ENCODE measurements at regions of chr6 and their contacts with region 1.

Region 1: DNA sequence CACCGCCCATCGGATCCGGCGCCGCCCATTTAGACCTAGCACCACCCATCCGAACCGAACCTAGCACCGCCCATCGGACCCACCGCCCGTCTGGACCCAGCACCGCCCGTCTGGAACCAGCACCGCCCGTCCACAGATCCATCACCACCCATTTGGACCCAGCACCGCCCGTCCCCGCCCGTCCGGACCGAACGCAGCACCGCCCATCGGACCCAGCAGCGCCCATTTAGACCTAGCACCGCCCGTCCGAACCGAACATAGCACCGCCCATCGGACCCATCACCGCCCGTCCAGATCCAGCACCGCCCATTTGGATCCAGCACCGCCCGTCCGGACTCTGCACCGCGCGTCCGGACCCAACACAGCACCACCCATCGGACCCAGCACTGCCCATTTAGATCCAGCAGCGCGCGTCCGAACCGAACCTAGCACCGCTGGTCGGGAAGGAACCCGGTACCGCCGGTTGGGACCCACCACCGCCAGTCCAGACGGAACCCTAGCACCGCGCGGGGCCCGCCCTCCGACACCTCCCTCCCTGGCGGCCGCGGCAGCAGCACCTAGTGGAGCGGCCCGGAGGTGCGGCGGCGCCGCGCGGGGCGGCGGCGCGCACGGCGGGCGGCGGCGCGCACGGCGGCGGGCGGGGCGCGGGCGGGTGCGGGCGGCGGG is 348 bp upstream of the AFDN start:
- DNase-seq: peak; percentile 11 to 73 (median 55)
- ATAC-seq: peak; percentile 97
- H3K4me3 ChIP-seq: peak overlapping the region; percentile 66
- H3K4me3 Mint-ChIP-seq: peak overlapping the region; percentile 83 to 91 (median 85)
- H3K27ac ChIP-seq: no peak overlapping the region
- H3K27ac Mint-ChIP-seq: peak overlapping the region in 4 of 9 donors; percentile 44 to 69 (median 60)
- H3K4me1 ChIP-seq: peaks cover 0 to 14% of the 10 kb centered on the region in 2 donors
- H3K4me1 Mint-ChIP-seq: peaks cover 5 to 43% (median 26%) of the 10 kb centered on the region in 7 donors
- H3K27me3 ChIP-seq: peaks cover 0 to 27% of the 10 kb centered on the region in 2 donors
- H3K27me3 Mint-ChIP-seq: peaks cover 49 to 81% (median 69%) of the 10 kb centered on the region in 5 donors

Region 2: GRCh38 chr6:166950443-166950821 is 875.9 kb before region 1 on chr6:
- CTCF ChIA-PET with region 1: no interaction called
- POLR2A ChIA-PET with region 1: no interaction called
- intact Hi-C with region 1: loop called in 1 of 2 experiments (anchors 5 kb)
- DNase-seq: peak in 1 of 9 donors; percentile 31
- ATAC-seq: peak; percentile 12
- H3K4me3 ChIP-seq: peak overlapping the region; percentile 45
- H3K4me3 Mint-ChIP-seq: peak overlapping the region; percentile 51 to 95 (median 84)
- H3K27ac ChIP-seq: peak overlapping the region; percentile 92
- H3K27ac Mint-ChIP-seq: peak overlapping the region; percentile 91 to 99 (median 98)
- H3K4me1 ChIP-seq: peaks cover 28 to 63% of the 10 kb centered on the region in 2 donors
- H3K4me1 Mint-ChIP-seq: peaks cover 42 to 67% (median 64%) of the 10 kb centered on the region in 7 donors
- H3K27me3 ChIP-seq: no peaks in the 10 kb centered on the region
- H3K27me3 Mint-ChIP-seq: no peaks in the 10 kb centered on the region

Region 3: GRCh38 chr6:167336844-167337630 is 489.3 kb before region 1 on chr6:
- CTCF ChIA-PET with region 1: no interaction called
- POLR2A ChIA-PET with region 1: no interaction called
- intact Hi-C with region 1: no loop called
- DNase-seq: no peak
- ATAC-seq: no peak
- H3K4me3 ChIP-seq: no peak overlapping the region
- H3K4me3 Mint-ChIP-seq: no peak overlapping the region
- H3K27ac ChIP-seq: no peak overlapping the region
- H3K27ac Mint-ChIP-seq: no peak overlapping the region
- H3K4me1 ChIP-seq: no peaks in the 10 kb centered on the region
- H3K4me1 Mint-ChIP-seq: peaks cover 0 to 2% (median 0%) of the 10 kb centered on the region in 7 donors
- H3K27me3 ChIP-seq: no peaks in the 10 kb centered on the region
- H3K27me3 Mint-ChIP-seq: peaks cover 0 to 16% (median 7%) of the 10 kb centered on the region in 5 donors

Region 4: GRCh38 chr6:167350731-167351655 is 475.4 kb before region 1 on chr6:
- CTCF ChIA-PET with region 1: no interaction called
- POLR2A ChIA-PET with region 1: no interaction called
- intact Hi-C with region 1: loop called in 1 of 2 experiments (anchors 5 kb)
- DNase-seq: peak; percentile 24 to 85 (median 66)
- ATAC-seq: peak; percentile 89
- H3K4me3 ChIP-seq: peak overlapping the region; percentile 65
- H3K4me3 Mint-ChIP-seq: peak overlapping the region; percentile 83 to 94 (median 91)
- H3K27ac ChIP-seq: no peak overlapping the region
- H3K27ac Mint-ChIP-seq: peak overlapping the region in 6 of 9 donors; percentile 11 to 70 (median 34)
- H3K4me1 ChIP-seq: peaks cover 0 to 4% of the 10 kb centered on the region in 2 donors
- H3K4me1 Mint-ChIP-seq: peaks cover 8 to 24% (median 16%) of the 10 kb centered on the region in 7 donors
- H3K27me3 ChIP-seq: no peaks in the 10 kb centered on the region
- H3K27me3 Mint-ChIP-seq: peaks cover 6 to 44% (median 20%) of the 10 kb centered on the region in 5 donors

Region 5: GRCh38 chr6:167706313-167707109 is 119.9 kb before region 1 on chr6:
- CTCF ChIA-PET with region 1: no interaction called
- POLR2A ChIA-PET with region 1: no interaction called
- intact Hi-C with region 1: loop called (anchors 2 to 5 kb)
- DNase-seq: peak; percentile 20 to 80 (median 75)
- ATAC-seq: peak; percentile 89
- H3K4me3 ChIP-seq: no peak overlapping the region
- H3K4me3 Mint-ChIP-seq: peak overlapping the region; percentile 60 to 81 (median 66)
- H3K27ac ChIP-seq: no peak overlapping the region
- H3K27ac Mint-ChIP-seq: peak overlapping the region in 7 of 9 donors; percentile 42 to 84 (median 75)
- H3K4me1 ChIP-seq: peaks cover 8 to 27% of the 10 kb centered on the region in 2 donors
- H3K4me1 Mint-ChIP-seq: peaks cover 25 to 48% (median 40%) of the 10 kb centered on the region in 7 donors
- H3K27me3 ChIP-seq: peaks cover 0 to 11% of the 10 kb centered on the region in 2 donors
- H3K27me3 Mint-ChIP-seq: peaks cover 44 to 82% (median 59%) of the 10 kb centered on the region in 5 donors

Region 6: GRCh38 chr6:167860550-167861226 is 34.3 kb after region 1 on chr6:
- CTCF ChIA-PET with region 1: no interaction called
- POLR2A ChIA-PET with region 1: no interaction called
- intact Hi-C with region 1: no loop called
- DNase-seq: no peak
- ATAC-seq: no peak
- H3K4me3 ChIP-seq: no peak overlapping the region
- H3K4me3 Mint-ChIP-seq: no peak overlapping the region
- H3K27ac ChIP-seq: no peak overlapping the region
- H3K27ac Mint-ChIP-seq: no peak overlapping the region
- H3K4me1 ChIP-seq: no peaks in the 10 kb centered on the region
- H3K4me1 Mint-ChIP-seq: peaks cover 0 to 14% (median 0%) of the 10 kb centered on the region in 7 donors
- H3K27me3 ChIP-seq: no peaks in the 10 kb centered on the region
- H3K27me3 Mint-ChIP-seq: peaks cover 10 to 31% (median 19%) of the 10 kb centered on the region in 5 donors

Region 7: GRCh38 chr6:167898673-167899311 is 72.4 kb after region 1 on chr6:
- CTCF ChIA-PET with region 1: no interaction called
- POLR2A ChIA-PET with region 1: no interaction called
- intact Hi-C with region 1: loop called in 1 of 2 experiments (anchors 2 kb)
- DNase-seq: peak in 3 of 9 donors; percentile 3 to 30 (median 19)
- ATAC-seq: no peak
- H3K4me3 ChIP-seq: no peak overlapping the region
- H3K4me3 Mint-ChIP-seq: no peak overlapping the region
- H3K27ac ChIP-seq: no peak overlapping the region
- H3K27ac Mint-ChIP-seq: no peak overlapping the region
- H3K4me1 ChIP-seq: no peaks in the 10 kb centered on the region
- H3K4me1 Mint-ChIP-seq: no peaks in the 10 kb centered on the region
- H3K27me3 ChIP-seq: no peaks in the 10 kb centered on the region
- H3K27me3 Mint-ChIP-seq: peaks cover 0 to 3% (median 0%) of the 10 kb centered on the region in 5 donors

Region 8: DNA sequence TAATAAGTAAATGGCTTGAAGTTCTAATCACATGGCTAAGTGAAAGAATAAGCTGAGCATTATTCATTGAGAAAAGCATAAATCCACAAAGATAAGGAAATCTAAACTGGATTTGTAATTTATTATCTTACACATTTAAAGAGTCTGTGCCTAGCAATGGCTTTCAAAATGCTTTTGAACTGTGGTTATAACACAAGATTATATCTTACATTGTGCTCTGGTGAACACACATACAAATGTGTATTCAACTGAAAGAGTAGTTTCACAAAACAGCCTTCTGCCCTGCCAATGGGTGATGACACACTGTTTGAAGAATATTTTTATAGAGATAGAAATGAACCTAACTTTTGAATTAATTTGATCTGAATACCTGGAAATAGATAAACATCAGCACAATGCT is 83.7 kb after region 1 on chr6:
- CTCF ChIA-PET with region 1: no interaction called
- POLR2A ChIA-PET with region 1: no interaction called
- intact Hi-C with region 1: no loop called
- DNase-seq: no peak
- ATAC-seq: no peak
- H3K4me3 ChIP-seq: no peak overlapping the region
- H3K4me3 Mint-ChIP-seq: no peak overlapping the region
- H3K27ac ChIP-seq: no peak overlapping the region
- H3K27ac Mint-ChIP-seq: no peak overlapping the region
- H3K4me1 ChIP-seq: no peaks in the 10 kb centered on the region
- H3K4me1 Mint-ChIP-seq: no peaks in the 10 kb centered on the region
- H3K27me3 ChIP-seq: no peaks in the 10 kb centered on the region
- H3K27me3 Mint-ChIP-seq: peaks cover 0 to 4% (median 0%) of the 10 kb centered on the region in 5 donors

Region 9: GRCh38 chr6:169064194-169064593 is 1237.8 kb after region 1 on chr6:
- CTCF ChIA-PET with region 1: no interaction called
- POLR2A ChIA-PET with region 1: no interaction called
- intact Hi-C with region 1: no loop called
- DNase-seq: no peak
- ATAC-seq: no peak
- H3K4me3 ChIP-seq: no peak overlapping the region
- H3K4me3 Mint-ChIP-seq: no peak overlapping the region
- H3K27ac ChIP-seq: no peak overlapping the region
- H3K27ac Mint-ChIP-seq: no peak overlapping the region
- H3K4me1 ChIP-seq: no peaks in the 10 kb centered on the region
- H3K4me1 Mint-ChIP-seq: no peaks in the 10 kb centered on the region
- H3K27me3 ChIP-seq: no peaks in the 10 kb centered on the region
- H3K27me3 Mint-ChIP-seq: peaks cover 0 to 23% (median 16%) of the 10 kb centered on the region in 5 donors